Upper lobe of right lung (tissue), 1 donor: ENCODE measurements at regions of chr9 and their contacts with region 1.

Region 1: DNA sequence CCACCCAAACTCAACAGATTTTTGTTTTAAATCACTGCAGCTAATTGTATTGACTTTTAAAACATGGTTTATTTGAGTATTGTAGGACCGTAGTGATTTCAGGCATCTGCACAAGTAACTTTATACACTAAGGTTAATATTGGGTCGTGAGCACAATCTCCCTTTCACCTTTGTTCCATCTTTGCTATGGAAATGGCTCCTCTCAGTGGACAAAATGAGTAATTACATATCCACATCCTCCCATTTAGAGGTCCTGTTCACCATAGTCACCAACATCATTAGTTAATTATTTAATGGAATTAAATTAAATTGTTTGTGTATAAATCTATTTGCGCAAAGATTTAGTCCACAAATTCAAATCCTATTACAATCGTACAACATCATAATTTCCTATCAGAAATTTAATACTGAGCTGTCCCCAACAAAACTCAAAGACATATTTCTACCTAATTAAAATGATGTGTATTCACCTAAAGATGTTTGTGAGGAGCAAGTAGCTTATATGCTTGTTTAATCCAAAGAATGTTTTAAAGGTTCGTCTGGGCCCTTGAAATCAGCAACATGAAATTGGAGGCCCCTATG is 173.0 kb upstream of the DAPK1 start:
- DNase-seq: no peak
- ATAC-seq: peak; percentile 87
- H3K4me3 ChIP-seq: no peak overlapping the region
- H3K27ac ChIP-seq: no peak overlapping the region
- H3K4me1 ChIP-seq: no peaks in the 10 kb centered on the region
- H3K27me3 ChIP-seq: peaks cover 6% of the 10 kb centered on the region
- CTCF ChIP-seq: peak; percentile 80

Region 2: DNA sequence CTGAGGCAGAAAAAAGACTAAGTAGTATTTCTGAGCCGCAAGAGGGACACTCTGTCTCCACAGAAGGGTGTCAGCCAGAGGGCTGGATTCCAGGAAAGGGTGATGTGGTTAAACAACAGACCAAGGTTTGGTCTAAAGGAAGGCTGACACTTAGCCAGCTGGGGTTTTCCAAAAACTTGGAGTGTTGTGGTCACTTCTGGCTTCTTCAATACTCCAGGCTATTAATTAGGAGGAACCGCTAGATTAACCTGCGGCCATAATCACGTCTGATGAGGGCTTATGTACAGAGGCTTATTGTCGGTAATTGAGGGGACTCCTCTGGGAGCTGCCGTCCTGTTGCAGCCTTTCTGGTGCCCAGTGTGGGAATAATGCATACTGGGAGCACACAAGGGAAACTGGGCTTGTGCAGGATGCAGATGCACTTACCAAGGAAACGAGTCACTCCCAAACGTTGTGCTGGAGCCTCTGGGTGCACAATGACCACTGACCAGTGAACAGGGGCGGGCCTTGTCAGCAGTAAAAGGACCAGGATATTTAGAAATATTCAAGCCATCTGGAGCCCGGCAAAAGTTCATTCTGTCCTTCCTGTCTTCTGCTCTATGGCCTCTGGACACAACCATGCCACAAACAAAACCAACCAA is 900.3 kb before region 1 on chr9:
- intact Hi-C with region 1: loop called (anchors 10 kb)
- DNase-seq: no peak
- ATAC-seq: no peak
- H3K4me3 ChIP-seq: no peak overlapping the region
- H3K27ac ChIP-seq: no peak overlapping the region
- H3K4me1 ChIP-seq: no peaks in the 10 kb centered on the region
- H3K27me3 ChIP-seq: no peaks in the 10 kb centered on the region
- CTCF ChIP-seq: no peak

Region 3: GRCh38 chr9:86486891-86487837 is 837.5 kb before region 1 on chr9:
- intact Hi-C with region 1: loop called (anchors 10 kb)
- DNase-seq: no peak
- ATAC-seq: peak; percentile 78
- H3K4me3 ChIP-seq: no peak overlapping the region
- H3K27ac ChIP-seq: no peak overlapping the region
- H3K4me1 ChIP-seq: no peaks in the 10 kb centered on the region
- H3K27me3 ChIP-seq: no peaks in the 10 kb centered on the region
- CTCF ChIP-seq: peak; percentile 61